ENCODE measurements at regions of chr2 and their contacts with region 1.

Region 1: GRCh38 chr2:101770726-101771125 is 73.2 kb downstream of the MAP4K4 start:
- DNase-seq: no peak
- H3K4me3 ChIP-seq: no peak overlapping the region
- CTCF ChIP-seq: peak; percentile 16

Region 2: DNA sequence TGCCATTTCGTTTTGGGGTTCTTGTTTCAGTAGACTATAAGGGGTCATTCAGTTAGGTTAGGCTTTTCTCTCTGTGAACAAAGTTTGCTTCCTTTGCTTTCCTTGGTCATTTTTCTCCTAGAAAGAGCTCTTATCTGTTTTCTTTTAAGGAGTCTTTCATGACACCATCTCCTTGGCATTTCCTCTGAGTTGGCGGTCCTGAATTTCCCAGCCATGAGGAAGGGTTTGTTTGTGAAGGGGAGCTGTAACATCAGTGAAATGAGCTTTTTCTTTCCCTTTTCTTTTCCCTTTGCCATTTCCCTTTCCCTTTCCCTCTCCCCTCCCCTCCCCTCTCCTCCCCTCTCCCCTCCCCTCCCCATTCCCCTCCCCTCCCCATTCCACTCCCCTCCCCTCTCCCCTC is 11.6 kb before region 1 on chr2:
- CTCF ChIA-PET with region 1: interaction called, 17 read pairs
- POLR2A ChIA-PET with region 1: interaction called, 6 read pairs
- DNase-seq: peak; percentile 80
- H3K4me3 ChIP-seq: no peak overlapping the region
- CTCF ChIP-seq: no peak

Region 3: GRCh38 chr2:101781326-101781725 is 10.6 kb after region 1 on chr2:
- CTCF ChIA-PET with region 1: interaction called, 34 read pairs
- POLR2A ChIA-PET with region 1: interaction called, 4 read pairs
- DNase-seq: no peak
- H3K4me3 ChIP-seq: no peak overlapping the region
- CTCF ChIP-seq: no peak

Region 4: DNA sequence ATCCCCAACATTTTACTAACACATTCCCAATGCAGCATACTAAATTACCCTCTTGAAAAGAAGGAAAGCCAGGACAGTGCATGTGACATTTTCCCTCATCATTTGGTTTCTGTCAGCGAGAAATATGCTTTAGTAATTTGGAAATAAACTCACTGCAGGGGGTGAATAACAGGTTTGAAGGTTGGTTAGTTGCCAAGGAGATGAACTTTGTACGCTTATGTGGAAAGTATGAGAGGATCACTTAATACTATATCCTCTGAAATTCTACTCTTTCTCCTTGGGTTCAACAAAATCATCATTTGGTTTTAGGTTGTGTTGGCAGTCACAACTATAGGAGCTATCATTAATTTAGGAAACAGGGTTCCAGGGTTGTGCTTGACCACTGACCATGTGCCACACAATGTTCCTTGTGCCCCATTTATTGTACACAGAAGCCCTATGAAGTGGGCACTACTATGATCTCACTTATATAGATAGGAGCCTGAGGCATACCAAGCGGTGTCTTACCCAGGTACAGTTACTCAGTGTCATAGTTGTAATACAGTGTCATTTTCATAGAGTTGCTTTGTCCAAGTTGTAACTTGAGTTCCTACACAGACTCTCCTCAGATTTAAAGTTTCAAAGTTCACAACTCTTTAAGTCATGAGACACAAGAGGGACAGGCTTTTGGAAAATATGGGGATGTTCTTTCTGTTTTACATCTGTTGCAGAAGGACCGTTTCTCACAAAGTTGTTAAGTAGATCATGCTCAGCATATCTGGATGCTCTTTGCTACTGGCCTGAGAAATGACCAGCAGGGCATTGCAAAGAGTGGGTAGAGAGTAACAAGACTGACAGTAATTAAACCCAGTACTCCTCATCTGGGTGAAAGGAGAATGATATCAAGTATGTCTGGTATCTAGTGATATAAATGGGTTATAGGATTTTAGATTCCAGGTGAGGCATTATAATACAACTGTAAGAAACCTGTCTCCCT is 18.6 kb after region 1 on chr2:
- CTCF ChIA-PET with region 1: interaction called, 34 read pairs
- POLR2A ChIA-PET with region 1: interaction called, 3 read pairs
- DNase-seq: no peak
- H3K4me3 ChIP-seq: no peak overlapping the region
- CTCF ChIP-seq: no peak

Measured in AG04449 (cell line).